Motor neuron (in vitro differentiated cells): ENCODE measurements at regions of chr22 and their contacts with region 1.

Region 1: GRCh38 chr22:34608540-34609115 is 457.3 kb upstream of the ISX start:
- ATAC-seq: peak in 3 of 8 experiments; percentile 52 to 92 (median 58)
- H3K4me3 ChIP-seq: no peak overlapping the region
- H3K27ac ChIP-seq: no peak overlapping the region
- H3K4me1 ChIP-seq: no peaks in the 10 kb centered on the region

Region 2: GRCh38 chr22:34709641-34710040 is 101.0 kb after region 1 on chr22:
- in situ Hi-C with region 1: loop called in 1 of 9 experiments (anchors 25 kb)
- ATAC-seq: no peak
- H3K4me3 ChIP-seq: no peak overlapping the region
- H3K27ac ChIP-seq: no peak overlapping the region
- H3K4me1 ChIP-seq: no peaks in the 10 kb centered on the region